ENCODE measurements at regions of chr10 and their contacts with region 1.

Region 1: GRCh38 chr10:112949875-112950507 is at the start of gene TCF7L2:
- DNase-seq: peak; percentile 96
- H3K4me3 ChIP-seq: peak within 1 kb of the TSS; percentile 71 to 93 (median 77)
- H3K27ac ChIP-seq: peak within 1 kb of the TSS; percentile 89
- H3K4me1 ChIP-seq: peaks cover 19% of the 10 kb centered on the region
- H3K27me3 ChIP-seq: no peaks in the 10 kb centered on the region
- CTCF ChIP-seq: no peak
- total RNA-seq, gene TCF7L2: 7.7 to 19.4 TPM

Region 2: GRCh38 chr10:112565434-112566053 is 384.4 kb before region 1 on chr10:
- CTCF ChIA-PET with region 1: no interaction called
- dilution Hi-C with region 1: no loop called
- in situ Hi-C with region 1: no loop called
- intact Hi-C with region 1: loop called (anchors 2 kb)
- DNase-seq: peak; percentile 53
- H3K4me3 ChIP-seq: no peak overlapping the region
- H3K27ac ChIP-seq: no peak overlapping the region
- H3K4me1 ChIP-seq: no peaks in the 10 kb centered on the region
- H3K27me3 ChIP-seq: no peaks in the 10 kb centered on the region
- CTCF ChIP-seq: peak; percentile 77 to 82

Region 3: GRCh38 chr10:112721080-112721698 is 228.8 kb before region 1 on chr10:
- CTCF ChIA-PET with region 1: no interaction called
- dilution Hi-C with region 1: no loop called
- in situ Hi-C with region 1: no loop called
- intact Hi-C with region 1: loop called (anchors 1 kb)
- DNase-seq: no peak
- H3K4me3 ChIP-seq: no peak overlapping the region
- H3K27ac ChIP-seq: no peak overlapping the region
- H3K4me1 ChIP-seq: peaks cover 10% of the 10 kb centered on the region
- H3K27me3 ChIP-seq: no peaks in the 10 kb centered on the region
- CTCF ChIP-seq: peak; percentile 54 to 62

Region 4: DNA sequence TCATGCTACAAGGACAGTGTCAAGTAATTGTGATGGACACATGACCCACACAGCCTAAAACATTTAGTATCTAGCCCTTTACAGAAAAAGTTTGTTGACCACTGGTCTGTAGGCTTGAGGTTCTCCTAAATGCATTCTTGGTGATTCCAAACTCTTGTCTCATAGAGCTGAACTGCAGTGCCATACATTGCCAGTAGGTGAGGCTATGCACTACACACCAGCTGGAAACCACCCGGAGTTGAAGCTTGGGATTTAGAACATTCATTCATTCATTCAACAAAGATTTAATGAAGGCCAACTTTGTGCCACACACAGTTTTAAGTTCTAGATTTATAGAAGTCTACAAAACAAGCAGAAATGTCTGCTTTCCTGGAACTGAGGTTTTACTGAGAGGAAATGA is 77.3 kb before region 1 on chr10:
- CTCF ChIA-PET with region 1: no interaction called
- dilution Hi-C with region 1: no loop called
- in situ Hi-C with region 1: no loop called
- intact Hi-C with region 1: loop called (anchors 5 kb)
- DNase-seq: no peak
- H3K4me3 ChIP-seq: no peak overlapping the region
- H3K27ac ChIP-seq: no peak overlapping the region
- H3K4me1 ChIP-seq: peaks cover 9% of the 10 kb centered on the region
- H3K27me3 ChIP-seq: no peaks in the 10 kb centered on the region
- CTCF ChIP-seq: peak; percentile 45 to 61

Region 5: DNA sequence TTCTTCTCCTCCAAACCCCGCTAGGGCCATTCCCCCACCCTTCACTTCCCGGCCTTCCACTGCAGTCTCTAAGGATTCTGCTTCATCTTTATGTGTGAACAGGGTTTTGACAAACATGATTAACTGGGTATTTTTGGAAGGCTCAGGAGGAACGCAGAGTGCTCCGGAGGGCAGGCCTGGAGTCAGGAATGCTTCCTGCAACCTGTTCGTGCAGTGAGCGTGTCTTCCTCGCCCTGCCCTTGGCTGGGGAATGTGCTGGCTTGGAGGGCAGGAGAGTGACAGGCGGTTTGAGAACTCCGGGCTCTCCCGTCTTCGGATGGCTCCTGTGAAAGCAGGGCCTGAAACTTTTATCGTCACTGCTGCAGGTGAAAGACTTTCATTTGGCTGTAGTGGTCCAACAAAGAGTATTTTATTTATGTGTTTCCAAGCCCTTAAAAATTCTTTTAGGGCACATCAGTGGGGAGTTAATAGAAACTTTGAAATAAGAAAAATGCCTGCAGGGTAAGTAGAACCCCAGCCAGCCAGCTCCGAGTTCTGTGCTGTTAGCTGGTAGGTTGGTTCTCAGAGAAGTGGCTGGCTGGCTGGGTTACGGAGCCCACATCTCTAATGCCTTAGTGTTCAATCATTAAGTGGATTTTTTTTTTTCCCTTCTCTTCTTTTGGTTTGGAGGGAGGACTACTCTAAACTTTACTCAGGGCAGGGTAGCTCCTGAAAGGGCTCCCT is 51.0 kb after region 1 on chr10:
- CTCF ChIA-PET with region 1: no interaction called
- dilution Hi-C with region 1: no loop called
- in situ Hi-C with region 1: no loop called
- intact Hi-C with region 1: loop called (anchors 2 kb)
- DNase-seq: peak; percentile 61
- H3K4me3 ChIP-seq: no peak overlapping the region
- H3K27ac ChIP-seq: peak overlapping the region; percentile 60
- H3K4me1 ChIP-seq: peaks cover 13% of the 10 kb centered on the region
- H3K27me3 ChIP-seq: no peaks in the 10 kb centered on the region
- CTCF ChIP-seq: peak; percentile 46 to 64

Region 6: DNA sequence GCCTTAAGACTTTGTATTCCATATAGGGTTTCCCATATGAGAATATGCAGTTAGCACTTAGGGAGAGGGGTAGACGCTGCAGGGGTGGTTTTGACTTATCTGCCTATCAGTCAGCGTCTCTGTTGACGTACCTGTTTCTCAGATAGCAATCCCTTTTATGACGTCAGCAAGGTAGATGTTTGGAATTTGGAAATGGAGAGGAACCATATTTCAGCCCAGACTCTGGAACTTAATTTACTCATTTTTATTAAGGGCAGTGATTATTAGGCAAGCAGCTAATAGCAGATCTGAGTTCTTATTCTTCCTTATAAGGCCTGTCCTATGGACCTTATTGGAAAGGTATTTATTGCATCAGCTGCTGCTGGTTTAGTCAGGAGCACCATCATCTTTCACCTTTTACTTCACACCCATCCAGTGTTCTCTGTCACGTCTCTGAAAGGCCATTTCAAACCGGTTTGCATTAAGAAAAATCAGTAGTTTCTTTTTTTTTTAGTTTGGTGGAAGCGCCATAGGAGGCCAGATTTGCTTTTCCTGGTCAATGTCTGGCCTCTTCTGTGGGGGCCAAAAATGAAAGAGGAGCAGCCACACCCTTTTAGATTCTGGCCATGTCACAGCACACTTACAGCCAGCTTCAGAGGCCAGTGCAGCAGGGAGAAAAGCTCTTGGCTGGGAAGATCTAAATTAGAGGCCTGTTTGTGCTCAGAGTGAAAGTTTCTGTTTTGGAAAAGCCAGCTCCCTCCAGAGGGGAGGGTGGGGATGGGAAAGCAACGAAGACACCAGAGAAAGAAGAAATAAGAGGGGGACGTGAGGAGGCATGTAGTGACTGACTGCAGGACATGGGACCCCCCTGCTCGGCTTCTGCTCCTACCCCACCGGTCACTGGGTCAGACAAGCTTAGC is 146.4 kb after region 1 on chr10:
- CTCF ChIA-PET with region 1: no interaction called
- dilution Hi-C with region 1: no loop called
- in situ Hi-C with region 1: no loop called
- intact Hi-C with region 1: no loop called
- DNase-seq: no peak
- H3K4me3 ChIP-seq: no peak overlapping the region
- H3K27ac ChIP-seq: no peak overlapping the region
- H3K4me1 ChIP-seq: peaks cover 40% of the 10 kb centered on the region
- H3K27me3 ChIP-seq: no peaks in the 10 kb centered on the region
- CTCF ChIP-seq: no peak

Region 7: GRCh38 chr10:113108212-113108835 is 158.3 kb after region 1 on chr10:
- CTCF ChIA-PET with region 1: no interaction called
- dilution Hi-C with region 1: no loop called
- in situ Hi-C with region 1: no loop called
- intact Hi-C with region 1: loop called (anchors 5 kb)
- DNase-seq: no peak
- H3K4me3 ChIP-seq: no peak overlapping the region
- H3K27ac ChIP-seq: no peak overlapping the region
- H3K4me1 ChIP-seq: peaks cover 11% of the 10 kb centered on the region
- H3K27me3 ChIP-seq: no peaks in the 10 kb centered on the region
- CTCF ChIP-seq: peak; percentile 54 to 63